B cell (primary cell): ENCODE measurements at regions of chr20 and their contacts with region 1.

Region 1: DNA sequence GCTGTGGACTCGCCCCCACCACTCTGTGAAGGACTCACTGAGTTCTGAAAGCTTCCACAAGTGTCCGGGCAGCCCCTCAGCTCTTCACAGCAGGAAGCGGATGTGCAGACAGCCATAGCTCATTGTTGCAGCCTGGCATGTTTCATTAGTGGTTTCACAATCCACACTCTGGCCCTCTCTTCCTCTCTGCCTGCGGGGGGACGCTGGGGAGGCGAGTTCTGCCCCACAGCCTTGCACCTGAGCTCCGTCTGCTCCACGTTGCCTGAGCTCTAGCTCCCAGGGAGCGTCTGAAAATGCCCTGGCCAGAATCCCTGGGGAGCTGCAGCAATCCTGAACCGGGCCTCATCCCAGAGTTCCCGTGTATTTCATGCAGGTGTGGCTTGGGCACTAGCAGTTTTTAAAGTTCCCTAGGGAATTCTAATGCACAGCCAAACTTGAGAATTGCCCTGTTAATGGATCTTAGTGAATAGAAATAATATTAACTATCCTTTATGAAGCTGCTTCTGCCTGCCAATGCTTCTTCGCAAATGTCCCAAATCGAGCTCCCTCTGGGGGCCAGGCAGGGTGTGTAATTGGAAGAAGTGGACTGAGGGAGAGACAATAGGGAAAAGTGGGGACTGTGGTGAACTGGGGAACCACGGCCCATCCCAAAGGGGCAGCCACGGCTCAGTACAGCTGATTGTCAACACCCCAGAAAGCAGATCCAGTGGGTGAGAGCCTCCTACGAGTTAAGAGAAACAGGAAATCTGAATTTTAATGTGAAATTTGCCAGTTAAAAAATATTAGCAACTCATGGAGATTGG is 51.5 kb downstream of the CTCFL start:
- DNase-seq: peak; percentile 69
- ATAC-seq: peak; percentile 52
- H3K4me3 ChIP-seq: peak overlapping the region in 2 of 5 experiments; percentile 19 to 37
- H3K4me3 Mint-ChIP-seq: peak overlapping the region; percentile 65
- H3K27ac ChIP-seq: peak overlapping the region in 1 of 2 donors; percentile 2
- H3K27ac Mint-ChIP-seq: peak overlapping the region; percentile 61
- H3K4me1 ChIP-seq: peaks cover 72 to 84% of the 10 kb centered on the region in 2 donors
- H3K4me1 Mint-ChIP-seq: peaks cover 86% of the 10 kb centered on the region
- H3K27me3 ChIP-seq: no peaks in the 10 kb centered on the region
- H3K27me3 Mint-ChIP-seq: peaks cover 4% of the 10 kb centered on the region
- CTCF ChIP-seq: no peak

Region 2: DNA sequence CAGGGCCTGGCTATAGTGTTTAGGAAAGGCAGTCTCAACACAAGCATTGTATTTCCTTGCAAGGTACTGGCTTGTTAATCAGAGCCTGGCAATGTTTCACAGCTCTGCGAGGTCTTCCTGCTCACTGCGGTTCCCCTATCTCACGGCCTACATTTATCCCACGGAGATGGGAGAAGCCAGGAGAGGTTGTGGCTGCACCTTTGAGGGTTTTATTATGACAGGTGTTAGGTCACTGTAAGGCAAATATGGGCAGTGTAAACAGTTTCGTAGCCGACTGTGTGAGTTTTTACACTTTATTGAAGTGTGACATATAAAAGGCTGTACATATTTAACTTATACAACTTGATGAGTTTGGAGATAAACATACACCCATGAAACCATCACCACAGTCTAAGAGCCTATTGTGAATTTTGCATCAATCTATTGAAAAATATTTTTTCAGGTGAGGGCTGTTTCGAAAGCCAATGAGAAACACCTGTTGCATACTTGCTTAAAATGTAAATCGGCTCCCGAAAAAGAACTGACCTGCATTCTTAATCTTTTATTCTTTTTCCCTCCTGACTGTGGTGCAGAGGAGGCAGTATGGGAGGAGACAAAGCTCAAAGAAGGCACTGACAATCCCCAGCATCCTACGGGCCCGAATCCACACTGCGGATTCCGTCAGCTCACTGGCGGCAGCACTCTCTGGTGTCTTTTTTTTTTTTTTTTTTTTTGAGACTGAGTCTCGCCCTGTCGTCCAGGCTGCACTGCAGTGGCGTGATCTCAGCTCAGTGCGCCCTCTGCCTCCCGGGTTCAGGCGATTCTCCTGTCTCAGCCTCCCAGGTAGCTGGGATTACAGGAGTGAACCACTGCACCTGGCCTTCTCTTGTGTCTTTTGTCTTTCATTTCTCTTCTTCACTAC is 89.8 kb before region 1 on chr20:
- CTCF ChIA-PET with region 1: interaction called, 18 read pairs
- POLR2A ChIA-PET with region 1: interaction called, 8 read pairs
- intact Hi-C with region 1: no loop called
- DNase-seq: no peak
- ATAC-seq: no peak
- H3K4me3 ChIP-seq: no peak overlapping the region
- H3K4me3 Mint-ChIP-seq: no peak overlapping the region
- H3K27ac ChIP-seq: no peak overlapping the region
- H3K27ac Mint-ChIP-seq: peak overlapping the region; percentile 10
- H3K4me1 ChIP-seq: peaks cover 2 to 8% of the 10 kb centered on the region in 2 donors
- H3K4me1 Mint-ChIP-seq: peaks cover 13% of the 10 kb centered on the region
- H3K27me3 ChIP-seq: no peaks in the 10 kb centered on the region
- H3K27me3 Mint-ChIP-seq: no peaks in the 10 kb centered on the region
- CTCF ChIP-seq: no peak

Region 3: DNA sequence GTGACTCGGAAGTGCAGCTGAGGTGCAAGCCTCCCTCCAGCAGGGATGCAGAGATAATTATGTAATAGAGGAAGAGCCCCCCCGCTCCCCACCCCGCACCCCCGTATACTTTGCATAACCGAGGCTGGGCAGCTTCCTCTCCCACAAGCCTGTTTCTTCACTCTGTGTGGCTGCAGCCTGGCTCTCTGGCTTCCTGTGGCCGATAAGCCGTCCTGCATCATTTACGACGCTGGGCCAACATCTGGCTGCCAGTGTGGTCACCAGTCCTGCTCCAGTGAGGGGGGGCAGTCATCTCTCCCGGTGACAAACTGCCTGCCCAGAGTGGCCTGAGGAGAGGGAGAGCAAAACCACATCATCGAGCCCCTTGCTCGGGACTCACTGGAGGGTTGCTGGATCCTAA is 23.0 kb before region 1 on chr20:
- CTCF ChIA-PET with region 1: interaction called, 11 read pairs
- POLR2A ChIA-PET with region 1: interaction called, 3 read pairs
- intact Hi-C with region 1: no loop called
- DNase-seq: peak; percentile 78
- ATAC-seq: peak; percentile 82
- H3K4me3 ChIP-seq: peak overlapping the region; percentile 15 to 48 (median 36)
- H3K4me3 Mint-ChIP-seq: peak overlapping the region; percentile 86
- H3K27ac ChIP-seq: peak overlapping the region; percentile 50
- H3K27ac Mint-ChIP-seq: peak overlapping the region; percentile 73
- H3K4me1 ChIP-seq: peaks cover 38 to 56% of the 10 kb centered on the region in 2 donors
- H3K4me1 Mint-ChIP-seq: peaks cover 63% of the 10 kb centered on the region
- H3K27me3 ChIP-seq: no peaks in the 10 kb centered on the region
- H3K27me3 Mint-ChIP-seq: no peaks in the 10 kb centered on the region
- CTCF ChIP-seq: no peak